HEK293 (cell line): ENCODE measurements at regions of chr6 and their contacts with region 1.

Region 1: GRCh38 chr6:32413427-32414047 is 6.6 kb upstream of the BTNL2 start:
- H3K4me3 ChIP-seq: no peak overlapping the region
- H3K27ac ChIP-seq: no peak overlapping the region
- H3K4me1 ChIP-seq: no peaks in the 10 kb centered on the region
- CTCF ChIP-seq: peak; percentile 91

Region 2: DNA sequence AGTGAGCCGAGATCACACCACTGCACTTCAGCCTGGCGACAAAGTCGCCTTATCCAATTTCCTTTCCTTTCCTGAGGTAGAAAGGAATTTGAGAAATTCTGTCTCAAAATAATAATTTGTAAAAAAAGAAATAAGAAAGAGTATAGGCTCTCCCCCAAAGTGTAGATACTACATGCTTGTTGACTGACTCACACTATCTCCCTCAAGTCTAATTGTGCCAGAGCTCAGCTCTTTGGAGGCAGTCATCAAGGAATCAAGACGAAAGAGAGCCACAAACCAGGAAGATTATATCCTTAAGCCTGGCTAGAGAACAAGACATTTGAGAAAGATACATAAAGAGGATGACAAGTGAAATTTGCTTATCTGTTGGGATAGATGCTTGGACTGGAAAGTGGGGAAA is 279.8 kb before region 1 on chr6:
- CTCF ChIA-PET with region 1: no interaction called
- POLR2A ChIA-PET with region 1: no interaction called
- H3K4me3 ChIP-seq: no peak overlapping the region
- H3K27ac ChIP-seq: no peak overlapping the region
- H3K4me1 ChIP-seq: peaks cover 8% of the 10 kb centered on the region
- CTCF ChIP-seq: no peak

Region 3: DNA sequence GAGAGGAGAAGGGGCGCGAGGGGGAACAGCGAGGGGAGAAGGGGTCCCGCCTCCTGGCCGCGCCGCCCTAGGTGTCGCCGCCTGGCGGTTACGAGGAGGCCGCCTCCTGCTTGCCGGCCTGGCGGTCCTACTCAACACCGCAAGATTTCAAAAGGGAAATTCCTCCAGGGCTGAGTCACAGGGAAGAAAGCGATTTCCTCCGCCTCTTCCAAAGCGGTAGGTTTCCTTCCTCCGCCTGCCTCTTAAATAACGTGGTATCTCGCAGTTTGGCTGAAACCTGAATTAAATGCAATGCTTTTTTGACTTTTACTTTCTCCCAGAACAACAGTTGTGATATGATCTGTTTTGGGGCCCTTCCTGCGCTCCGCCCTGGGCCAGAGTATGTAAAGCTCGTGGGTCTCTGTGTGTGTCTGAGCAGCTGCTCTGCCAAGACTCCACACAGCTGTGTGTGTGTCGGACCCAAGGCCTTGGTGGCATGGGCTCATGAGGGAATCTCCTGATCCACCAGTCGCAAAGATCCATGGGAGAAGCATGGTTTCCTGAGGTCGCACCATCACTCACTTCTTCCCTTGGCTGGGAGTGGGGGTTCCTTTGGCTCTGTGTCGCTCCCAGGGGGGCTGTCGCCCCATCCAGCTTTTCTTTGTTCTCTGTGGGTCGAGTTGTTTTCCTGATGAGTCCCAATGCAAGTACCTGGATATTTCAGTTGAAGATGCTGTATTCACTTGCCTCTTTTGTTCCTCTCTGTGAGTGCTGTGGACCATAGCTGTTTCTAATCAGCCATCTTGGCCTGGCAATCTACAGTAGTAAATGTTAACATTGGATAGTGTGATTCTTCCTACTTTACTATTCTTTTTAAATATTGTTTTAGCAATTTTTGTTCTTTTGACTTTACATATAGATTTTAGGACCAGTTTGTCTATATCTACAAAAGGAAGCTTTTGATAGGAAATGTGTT is 158.1 kb before region 1 on chr6:
- CTCF ChIA-PET with region 1: interaction called, 14 read pairs
- POLR2A ChIA-PET with region 1: no interaction called
- H3K4me3 ChIP-seq: peak overlapping the region; percentile 25
- H3K27ac ChIP-seq: 0 out of 2 replicates have a peak overlapping the region, but pooled peaks have one; percentile 30
- H3K4me1 ChIP-seq: no peaks in the 10 kb centered on the region
- CTCF ChIP-seq: no peak

Region 4: GRCh38 chr6:32298663-32299267 is 114.8 kb before region 1 on chr6:
- CTCF ChIA-PET with region 1: no interaction called
- POLR2A ChIA-PET with region 1: no interaction called
- H3K4me3 ChIP-seq: no peak overlapping the region
- H3K27ac ChIP-seq: no peak overlapping the region
- H3K4me1 ChIP-seq: no peaks in the 10 kb centered on the region; the same call in 1 of the 2 replicates
- CTCF ChIP-seq: no peak

Region 5: GRCh38 chr6:32424589-32425300 is 11.2 kb after region 1 on chr6:
- CTCF ChIA-PET with region 1: interaction called, 48 read pairs
- POLR2A ChIA-PET with region 1: no interaction called
- H3K4me3 ChIP-seq: no peak overlapping the region
- H3K27ac ChIP-seq: no peak overlapping the region
- H3K4me1 ChIP-seq: no peaks in the 10 kb centered on the region
- CTCF ChIP-seq: no peak

Region 6: GRCh38 chr6:32685603-32686002 is 272.1 kb after region 1 on chr6:
- CTCF ChIA-PET with region 1: interaction called, 13 read pairs
- POLR2A ChIA-PET with region 1: no interaction called
- H3K4me3 ChIP-seq: no peak overlapping the region
- H3K27ac ChIP-seq: no peak overlapping the region
- H3K4me1 ChIP-seq: no peaks in the 10 kb centered on the region
- CTCF ChIP-seq: no peak

Region 7: GRCh38 chr6:32785781-32786533 is 372.4 kb after region 1 on chr6:
- CTCF ChIA-PET with region 1: interaction called, 179 read pairs
- POLR2A ChIA-PET with region 1: no interaction called
- H3K4me3 ChIP-seq: no peak overlapping the region
- H3K27ac ChIP-seq: no peak overlapping the region
- H3K4me1 ChIP-seq: no peaks in the 10 kb centered on the region
- CTCF ChIP-seq: peak; percentile 41; the same call in 1 of the 2 replicates